ENCODE measurements at regions of chr2 and their contacts with region 1.

Region 1: DNA sequence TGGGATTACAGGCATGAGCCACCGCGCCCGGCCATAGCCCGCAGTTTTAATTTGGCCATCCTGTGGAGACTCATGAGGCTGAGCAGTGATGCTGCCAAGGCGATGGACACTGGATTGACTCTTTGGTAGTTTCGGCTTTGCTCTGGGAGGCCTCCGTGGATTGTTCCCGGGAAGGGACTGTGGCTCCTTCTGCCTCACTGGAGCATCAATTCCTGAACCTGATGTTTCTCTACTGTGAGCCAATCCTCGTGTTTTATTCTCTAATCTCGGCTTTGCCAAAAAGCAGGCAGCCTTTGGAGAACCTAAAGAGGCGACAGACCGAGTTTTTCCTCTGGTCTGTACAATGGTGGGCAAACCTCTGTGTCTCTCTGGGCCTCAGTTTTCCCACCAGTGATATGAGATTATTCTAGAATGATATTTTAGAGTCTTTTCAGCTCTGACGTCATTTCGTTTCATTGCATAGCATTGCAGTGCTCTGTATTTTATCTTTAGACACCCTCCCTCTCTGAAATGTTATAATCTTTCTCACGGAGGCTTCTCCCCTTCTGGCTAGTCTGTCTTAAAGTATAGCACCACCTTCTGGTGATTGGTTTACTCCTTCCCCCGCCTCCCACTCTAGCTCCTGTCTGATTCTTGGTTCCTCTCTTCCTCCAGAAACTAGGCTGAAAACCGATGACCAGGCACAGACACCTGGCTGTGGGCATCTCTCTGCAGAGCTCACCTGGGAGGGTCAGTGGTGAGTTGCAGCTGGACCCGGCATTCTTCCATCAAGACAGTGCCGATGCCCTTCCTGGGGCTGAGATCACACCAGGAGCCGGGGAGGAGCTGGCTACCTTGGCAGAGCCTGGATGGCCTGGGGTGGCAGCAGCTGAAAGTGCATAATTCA is 341.3 kb downstream of the MYCN start:
- DNase-seq: peak in 7 of 10 donors; percentile 19 to 87 (median 38)

Region 2: DNA sequence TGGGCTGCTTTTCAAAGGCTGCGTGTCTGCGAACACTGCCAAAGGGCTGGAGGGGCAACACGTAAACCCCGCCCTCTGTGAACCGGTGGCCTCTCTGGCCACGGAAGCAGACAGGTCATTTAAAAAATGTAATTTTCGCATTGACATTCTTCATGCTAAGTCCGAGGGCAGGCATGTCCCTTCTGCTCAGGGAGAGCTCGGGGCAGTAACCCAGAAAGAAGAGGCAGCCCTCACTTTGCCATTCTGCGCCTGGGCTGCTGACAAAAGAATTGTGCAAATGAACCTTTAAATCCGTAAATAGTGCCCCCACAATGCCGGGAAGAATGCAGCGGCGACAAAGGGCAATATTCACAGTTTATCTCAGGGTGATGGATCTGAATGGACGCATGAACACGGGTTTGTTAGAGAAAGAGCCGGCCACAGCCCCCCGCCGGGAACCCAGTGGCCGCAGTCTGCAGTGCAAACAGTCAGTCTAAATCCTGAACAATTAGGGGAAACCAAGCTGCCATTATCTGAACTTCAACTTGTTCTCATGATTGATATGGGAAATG is 115.2 kb before region 1 on chr2:
- intact Hi-C with region 1: no loop called
- DNase-seq: peak in 1 of 10 donors; percentile 73

Region 3: DNA sequence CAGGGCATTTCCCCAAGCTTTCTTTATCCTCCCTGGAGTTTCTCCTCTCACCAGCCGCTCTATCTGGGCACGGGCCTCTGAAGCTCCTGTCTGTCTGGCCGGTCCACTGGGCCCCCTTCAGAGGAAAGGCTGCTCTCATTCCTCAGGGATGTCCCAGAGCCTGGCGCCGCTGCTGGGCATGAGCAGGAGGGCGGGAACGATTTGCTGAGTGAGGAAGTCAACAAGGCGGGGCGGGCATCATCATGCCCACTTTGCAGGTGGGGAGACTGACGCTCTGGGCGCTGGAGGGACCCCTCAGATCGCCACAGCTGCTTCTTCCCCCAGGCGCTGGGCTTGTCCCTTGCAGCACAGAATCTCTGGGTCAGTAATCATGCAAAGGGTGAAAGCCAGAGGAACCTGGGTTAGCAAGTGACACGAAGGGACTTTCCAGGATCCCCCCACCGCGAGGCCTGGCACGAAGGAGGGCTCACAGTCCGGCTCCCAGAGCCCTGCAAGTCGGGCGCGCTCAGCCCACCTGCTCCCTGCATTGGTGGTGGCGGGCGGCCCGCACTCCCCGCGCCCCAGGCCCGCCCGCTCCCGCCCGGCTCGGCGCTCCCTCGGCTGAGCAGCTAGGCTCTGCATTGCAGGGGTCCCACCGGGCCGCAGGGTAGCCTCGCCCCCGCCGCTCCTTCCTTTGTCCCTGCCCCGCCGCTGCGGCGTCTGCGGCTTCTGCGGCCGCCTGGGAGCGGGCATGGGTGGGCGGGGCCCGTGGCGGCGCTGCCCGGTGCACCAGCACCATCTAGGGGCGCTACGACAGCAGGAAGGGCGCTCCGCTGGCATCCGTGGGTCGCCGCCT is 226.2 kb after region 1 on chr2:
- intact Hi-C with region 1: loop called (anchors 5 kb)
- DNase-seq: peak; percentile 26 to 95 (median 60)